ENCODE measurements at regions of chr17 and their contacts with region 1.

Region 1: GRCh38 chr17:2892305-2892971 is 96.2 kb downstream of the RAP1GAP2 start:
- DNase-seq: peak; percentile 70
- ATAC-seq: peak; percentile 37; the same call in 1 of the 3 replicates
- H3K4me3 ChIP-seq: no peak overlapping the region
- H3K27ac ChIP-seq: no peak overlapping the region
- H3K4me1 ChIP-seq: peaks cover 39% of the 10 kb centered on the region
- H3K27me3 ChIP-seq: no peaks in the 10 kb centered on the region
- CTCF ChIP-seq: no peak
- EP300 ChIP-seq: no peak; a peak in 1 of 4 replicates
- POLR2A ChIP-seq: no peak
- RAD21 ChIP-seq: no peak

Region 2: GRCh38 chr17:2776589-2777241 is 115.7 kb before region 1 on chr17:
- CTCF ChIA-PET with region 1: no interaction called
- POLR2A ChIA-PET with region 1: no interaction called
- in situ Hi-C with region 1: no loop called
- intact Hi-C with region 1: no loop called
- DNase-seq: peak; percentile 34
- ATAC-seq: peak; percentile 83
- H3K4me3 ChIP-seq: peak overlapping the region; percentile 34 to 86 (median 72); a peak in 5 of 6 replicates
- H3K27ac ChIP-seq: peak overlapping the region; percentile 25
- H3K4me1 ChIP-seq: peaks cover 9% of the 10 kb centered on the region; the same call in 1 of the 2 replicates
- H3K27me3 ChIP-seq: peaks cover 0 to 14% of the 10 kb centered on the region in 2 experiments; a peak in 2 of 5 replicates
- CTCF ChIP-seq: peak; percentile 37
- EP300 ChIP-seq: no peak
- POLR2A ChIP-seq: peak in 1 of 2 experiments; percentile 79; a peak in 2 of 4 replicates
- RAD21 ChIP-seq: no peak

Region 3: DNA sequence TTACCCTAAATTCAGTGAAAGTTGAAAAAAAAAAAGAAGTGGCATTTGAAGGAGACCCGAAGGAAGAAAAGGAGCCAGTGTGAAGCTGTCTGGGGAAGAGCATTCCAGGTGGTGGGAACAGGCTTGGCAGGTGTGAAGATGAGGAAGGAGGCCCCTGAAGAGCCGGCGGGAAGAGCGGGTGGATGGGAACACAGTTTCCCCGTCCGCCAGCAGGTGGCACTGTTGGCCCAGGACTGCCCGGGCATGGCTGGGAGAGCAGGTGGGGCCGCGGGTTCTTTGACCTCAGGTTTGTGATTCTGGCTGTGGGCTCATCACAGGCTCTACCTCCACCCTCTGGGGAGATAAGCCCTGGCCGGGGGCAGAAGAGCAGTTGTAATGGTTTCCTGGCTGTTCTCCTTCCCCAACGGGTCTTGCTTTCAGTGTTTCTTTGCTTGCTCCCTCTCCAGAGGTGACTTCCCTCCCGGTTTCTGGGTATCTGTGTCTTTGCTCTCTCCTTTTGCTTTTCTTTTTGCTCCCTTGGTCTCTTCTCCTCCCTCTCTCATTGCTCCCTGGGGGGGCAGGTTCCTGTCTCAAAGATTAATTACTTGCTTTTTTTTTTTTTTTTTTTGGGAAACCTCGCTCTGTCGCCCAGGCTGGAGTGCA is 63.9 kb before region 1 on chr17:
- CTCF ChIA-PET with region 1: no interaction called
- POLR2A ChIA-PET with region 1: no interaction called
- in situ Hi-C with region 1: no loop called
- intact Hi-C with region 1: no loop called
- DNase-seq: peak; percentile 52
- ATAC-seq: peak; percentile 91
- H3K4me3 ChIP-seq: no peak overlapping the region
- H3K27ac ChIP-seq: no peak overlapping the region
- H3K4me1 ChIP-seq: peaks cover 18% of the 10 kb centered on the region
- H3K27me3 ChIP-seq: no peaks in the 10 kb centered on the region
- CTCF ChIP-seq: peak; percentile 94
- EP300 ChIP-seq: no peak
- POLR2A ChIP-seq: no peak
- RAD21 ChIP-seq: peak; percentile 91

Region 4: GRCh38 chr17:2867441-2868424 is 24.7 kb before region 1 on chr17:
- CTCF ChIA-PET with region 1: no interaction called
- POLR2A ChIA-PET with region 1: interaction called, 12 read pairs
- in situ Hi-C with region 1: no loop called
- intact Hi-C with region 1: no loop called
- DNase-seq: peak; percentile 87
- ATAC-seq: peak; percentile 86
- H3K4me3 ChIP-seq: peak overlapping the region; percentile 18 to 57 (median 30); a peak in 4 of 6 replicates
- H3K27ac ChIP-seq: peak overlapping the region; percentile 50
- H3K4me1 ChIP-seq: peaks cover 36% of the 10 kb centered on the region
- H3K27me3 ChIP-seq: no peaks in the 10 kb centered on the region
- CTCF ChIP-seq: no peak
- EP300 ChIP-seq: peak in 1 of 2 experiments; percentile 59; a peak in 1 of 4 replicates
- POLR2A ChIP-seq: no peak
- RAD21 ChIP-seq: no peak